Activated CD8-positive, alpha-beta T cell treated with anti-CD3 and anti-CD28 coated beads, Interleukin-2, amount 10 ng/mL, durations not matched to agents 7 days and 5 days (primary cell): ENCODE measurements at regions of chr1 and their contacts with region 1.

Region 1: GRCh38 chr1:109984456-109985275 is at the start of gene AHCYL1:
- DNase-seq: peak; percentile 100
- ATAC-seq: peak; percentile 98
- H3K4me3 Mint-ChIP-seq: peak within 1 kb of the TSS; percentile 100
- H3K27ac Mint-ChIP-seq: peak within 1 kb of the TSS; percentile 97
- H3K4me1 Mint-ChIP-seq: peaks cover 38% of the 10 kb centered on the region
- H3K27me3 Mint-ChIP-seq: no peaks in the 10 kb centered on the region
- total RNA-seq, gene AHCYL1: 55.0 to 64.5 TPM

Region 2: GRCh38 chr1:109548321-109549267 is 436.1 kb before region 1 on chr1 and contains the start of gene GNAI3:
- CTCF ChIA-PET with region 1: interaction called, 31 read pairs
- POLR2A ChIA-PET with region 1: interaction called, 15 read pairs
- DNase-seq: peak; percentile 98
- ATAC-seq: peak; percentile 92
- H3K4me3 Mint-ChIP-seq: peak within 1 kb of the TSS; percentile 97
- H3K27ac Mint-ChIP-seq: peak within 1 kb of the TSS; percentile 98
- H3K4me1 Mint-ChIP-seq: peaks cover 44% of the 10 kb centered on the region
- H3K27me3 Mint-ChIP-seq: no peaks in the 10 kb centered on the region
- total RNA-seq, gene GNAI3: 9.6 to 10.2 TPM

Region 3: DNA sequence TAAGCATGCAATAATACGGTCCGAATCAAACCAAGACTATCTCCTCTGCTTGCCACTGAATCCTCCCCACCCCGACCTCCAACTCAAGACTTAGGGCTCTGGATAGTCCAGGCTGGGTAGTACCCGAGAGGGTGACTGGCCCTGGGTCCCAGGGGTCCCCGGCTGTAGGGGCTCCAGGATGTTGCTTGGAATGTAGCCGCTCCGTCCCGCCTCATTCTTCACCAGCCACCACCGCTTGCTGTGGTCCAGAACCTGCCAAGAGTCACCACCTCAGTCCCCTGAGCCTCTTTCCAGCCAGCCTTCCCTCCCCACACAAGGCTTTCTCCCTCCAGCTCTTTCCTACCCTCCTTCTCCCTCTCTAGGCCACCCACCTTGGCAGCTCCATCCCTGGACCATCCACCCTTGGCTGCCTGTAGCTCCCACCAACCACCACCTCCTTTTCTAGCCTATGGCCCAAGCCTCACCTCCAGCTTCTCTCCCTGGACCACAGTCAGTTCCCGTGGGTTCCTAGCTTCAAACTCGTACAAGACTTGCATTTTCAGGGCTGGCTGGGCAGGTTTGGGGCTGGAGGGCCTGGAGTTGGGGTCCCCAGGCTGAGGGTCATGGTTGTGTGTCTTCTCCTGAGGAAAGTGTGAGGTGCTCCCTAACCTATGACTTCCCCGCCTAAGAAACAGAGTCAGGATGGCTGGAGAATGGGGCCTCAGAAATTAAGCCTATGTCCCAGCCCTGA is 233.0 kb before region 1 on chr1:
- CTCF ChIA-PET with region 1: interaction called, 16 read pairs
- POLR2A ChIA-PET with region 1: no interaction called
- DNase-seq: no peak
- ATAC-seq: no peak
- H3K4me3 Mint-ChIP-seq: no peak overlapping the region
- H3K27ac Mint-ChIP-seq: no peak overlapping the region
- H3K4me1 Mint-ChIP-seq: no peaks in the 10 kb centered on the region
- H3K27me3 Mint-ChIP-seq: peaks cover 18% of the 10 kb centered on the region

Region 4: DNA sequence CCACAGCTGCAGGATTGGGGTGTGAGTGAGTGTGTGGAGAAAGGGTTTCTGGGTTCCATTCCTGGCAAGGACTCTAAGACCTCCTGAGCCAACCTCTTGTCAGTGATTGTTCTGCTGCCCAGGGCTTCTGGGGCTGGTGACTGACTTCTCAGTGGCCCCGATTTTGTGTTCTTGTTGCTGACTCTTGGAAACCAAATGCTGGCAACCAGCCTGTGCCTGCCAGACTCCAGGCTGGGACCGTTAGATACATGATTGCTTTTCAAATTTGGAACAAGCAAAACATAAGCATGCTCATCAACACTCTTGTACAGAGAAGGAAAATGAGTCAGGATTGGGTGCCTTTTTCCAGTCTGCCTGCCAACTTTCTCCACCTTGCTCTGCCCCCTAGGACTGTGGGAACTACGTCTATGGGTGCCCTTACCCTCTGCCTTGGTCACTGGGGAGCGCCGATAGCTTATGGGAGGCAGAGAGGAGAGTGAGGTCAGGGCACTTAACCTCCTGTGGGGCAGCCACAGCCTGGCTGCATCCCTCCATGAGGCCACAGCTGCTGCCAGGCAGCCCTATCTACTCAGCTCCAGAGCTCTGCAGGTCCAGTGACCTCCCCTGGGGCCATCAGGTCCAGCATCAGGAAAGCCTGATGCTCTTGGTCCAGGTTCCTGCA is 181.6 kb before region 1 on chr1:
- CTCF ChIA-PET with region 1: interaction called, 69 read pairs
- POLR2A ChIA-PET with region 1: interaction called, 4 read pairs
- DNase-seq: no peak
- ATAC-seq: peak; percentile 2
- H3K4me3 Mint-ChIP-seq: peak overlapping the region; percentile 63
- H3K27ac Mint-ChIP-seq: peak overlapping the region; percentile 95
- H3K4me1 Mint-ChIP-seq: peaks cover 90% of the 10 kb centered on the region
- H3K27me3 Mint-ChIP-seq: no peaks in the 10 kb centered on the region

Region 5: GRCh38 chr1:109917768-109918606 is 66.7 kb before region 1 on chr1:
- CTCF ChIA-PET with region 1: interaction called, 44 read pairs
- POLR2A ChIA-PET with region 1: interaction called, 3 read pairs
- DNase-seq: no peak
- ATAC-seq: no peak
- H3K4me3 Mint-ChIP-seq: no peak overlapping the region
- H3K27ac Mint-ChIP-seq: peak overlapping the region; percentile 53
- H3K4me1 Mint-ChIP-seq: peaks cover 69% of the 10 kb centered on the region
- H3K27me3 Mint-ChIP-seq: no peaks in the 10 kb centered on the region

Region 6: DNA sequence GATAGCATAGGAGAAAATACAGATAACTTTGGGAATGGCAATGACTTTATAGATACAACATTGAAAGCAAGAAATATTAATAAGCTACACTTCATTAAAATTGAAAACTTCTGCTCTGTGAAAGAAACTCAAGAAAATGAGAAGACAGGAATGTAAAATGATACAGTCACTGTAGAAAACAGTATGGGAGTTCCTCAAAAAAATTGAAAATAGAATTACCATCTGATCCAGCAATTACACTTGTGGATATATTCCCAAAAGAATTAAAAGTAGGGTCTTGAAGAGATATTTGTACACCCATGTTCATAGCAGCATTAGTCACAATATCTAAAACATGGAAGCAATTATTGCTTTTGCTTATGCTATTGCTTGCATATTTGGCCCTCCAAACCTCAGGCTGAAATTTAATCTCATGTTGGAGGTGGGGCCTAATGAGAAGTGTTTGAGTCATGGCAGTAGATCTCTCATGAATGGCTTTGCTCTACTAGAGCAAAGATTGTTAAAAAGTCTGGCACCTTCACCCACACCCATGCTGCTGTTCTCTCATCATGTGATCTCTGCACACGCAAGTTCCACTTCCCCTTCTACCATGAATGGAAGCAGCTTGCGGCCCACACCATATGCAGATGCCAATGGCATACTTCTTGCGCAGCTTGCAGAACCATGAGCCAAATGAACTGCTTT is 15.4 kb before region 1 on chr1:
- CTCF ChIA-PET with region 1: interaction called, 24 read pairs
- POLR2A ChIA-PET with region 1: no interaction called
- DNase-seq: no peak
- ATAC-seq: no peak
- H3K4me3 Mint-ChIP-seq: no peak overlapping the region
- H3K27ac Mint-ChIP-seq: no peak overlapping the region
- H3K4me1 Mint-ChIP-seq: no peaks in the 10 kb centered on the region
- H3K27me3 Mint-ChIP-seq: peaks cover 47% of the 10 kb centered on the region

Region 7: GRCh38 chr1:110102081-110102480 is 117.4 kb after region 1 on chr1:
- CTCF ChIA-PET with region 1: no interaction called
- POLR2A ChIA-PET with region 1: no interaction called
- DNase-seq: no peak
- ATAC-seq: no peak
- H3K4me3 Mint-ChIP-seq: no peak overlapping the region
- H3K27ac Mint-ChIP-seq: no peak overlapping the region
- H3K4me1 Mint-ChIP-seq: no peaks in the 10 kb centered on the region
- H3K27me3 Mint-ChIP-seq: peaks cover 2% of the 10 kb centered on the region